ENCODE measurements at regions of chr4 and their contacts with region 1.

Region 1: DNA sequence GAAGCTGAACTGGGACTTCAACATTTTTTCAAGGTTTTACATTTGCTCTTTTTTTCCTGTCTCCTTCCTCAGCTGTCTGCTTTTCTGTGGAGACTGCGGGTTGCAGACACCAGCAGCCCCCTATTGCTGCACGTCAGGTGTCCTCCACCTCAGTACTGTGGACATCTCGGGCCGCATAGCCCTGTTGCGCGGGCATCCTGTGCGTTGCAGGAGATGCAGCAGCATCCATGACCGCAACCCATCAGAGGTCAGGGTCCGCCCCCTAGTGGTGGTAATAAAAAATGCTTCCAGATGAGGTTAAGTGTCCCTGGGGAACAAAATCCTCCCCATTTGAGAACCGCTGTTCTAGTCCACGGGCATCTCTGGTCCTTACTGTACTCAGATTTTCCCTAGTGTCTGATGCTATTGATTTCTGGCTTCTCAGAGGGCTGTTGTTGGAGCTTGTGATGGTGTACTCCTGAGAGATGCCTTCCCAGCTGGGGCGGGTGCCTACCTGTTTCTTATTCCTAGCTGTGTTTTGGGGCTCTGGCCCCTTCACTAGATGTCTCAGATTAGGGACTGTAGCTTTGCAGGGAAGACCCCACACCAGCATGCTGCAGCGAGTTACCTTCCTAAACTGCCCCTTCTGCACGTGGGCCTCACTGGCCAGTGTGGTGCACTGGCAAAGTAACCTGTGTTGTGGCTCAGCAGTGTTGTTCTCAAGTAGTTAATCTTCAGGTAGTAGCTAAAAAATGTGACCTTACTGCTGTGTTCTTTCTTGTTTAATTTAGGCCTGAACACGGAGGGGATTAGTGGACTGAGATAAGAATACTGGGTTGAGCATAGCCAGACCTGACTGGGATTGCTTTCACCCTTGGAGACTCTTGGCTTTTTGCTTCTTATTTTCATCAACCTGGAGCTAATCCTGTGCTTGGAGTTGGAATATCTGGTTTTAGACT is 28.2 kb downstream of the NSD2 start:
- DNase-seq: peak; percentile 43 to 80 (median 70)
- H3K4me3 ChIP-seq: peak overlapping the region in 3 of 59 donors; percentile 11 to 28 (median 27)
- H3K27ac ChIP-seq: peak overlapping the region in 2 of 59 donors; percentile 19 to 25
- H3K27me3 ChIP-seq: no peaks in the 10 kb centered on the region
- CTCF ChIP-seq: peak; percentile 81 to 97 (median 92)

Region 2: GRCh38 chr4:742742-743311 is 1156.6 kb before region 1 on chr4:
- intact Hi-C with region 1: no loop called
- DNase-seq: peak in 6 of 10 donors; percentile 55 to 74 (median 58)
- H3K4me3 ChIP-seq: no peak overlapping the region
- H3K27ac ChIP-seq: no peak overlapping the region
- H3K27me3 ChIP-seq: no peaks in the 10 kb centered on the region
- CTCF ChIP-seq: peak; percentile 50 to 91 (median 81)

Region 3: DNA sequence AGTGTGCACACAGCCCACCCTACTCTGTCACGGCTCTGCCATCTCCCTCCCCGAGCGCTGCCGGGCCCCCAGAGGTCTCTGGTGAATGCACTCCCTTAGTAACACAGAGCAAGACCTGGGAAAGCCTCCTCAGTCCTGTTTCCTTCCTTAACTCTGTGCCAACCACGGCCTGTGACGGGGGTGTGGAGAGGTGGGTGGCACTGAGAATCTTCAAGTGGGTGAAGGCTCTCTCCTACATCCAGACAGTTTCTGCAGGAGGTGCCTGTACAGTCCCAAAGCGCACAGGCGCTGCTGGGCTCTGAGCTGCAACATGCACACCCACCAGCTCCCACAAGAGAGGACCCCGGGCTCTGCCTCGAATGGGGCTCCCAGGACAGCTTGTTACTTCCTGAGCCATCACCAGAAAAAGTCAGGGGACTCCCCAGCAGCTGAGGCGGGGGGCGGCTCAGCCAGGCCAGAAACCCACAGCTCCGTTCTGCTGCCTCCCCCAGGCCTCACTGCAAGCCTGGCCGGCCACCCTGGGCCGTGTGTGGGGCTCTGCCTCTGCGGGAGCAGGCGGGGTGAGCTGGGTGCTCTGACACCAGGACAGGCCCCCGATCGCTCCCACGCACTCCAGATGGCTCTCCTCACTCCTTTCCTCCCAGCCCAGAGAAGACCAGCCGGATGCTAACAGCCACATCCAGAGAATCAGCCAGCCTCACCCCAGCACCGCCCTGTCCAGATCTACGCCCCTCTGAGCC is 245.0 kb before region 1 on chr4:
- intact Hi-C with region 1: no loop called
- DNase-seq: no peak
- H3K4me3 ChIP-seq: no peak overlapping the region
- H3K27ac ChIP-seq: no peak overlapping the region
- H3K27me3 ChIP-seq: no peaks in the 10 kb centered on the region
- CTCF ChIP-seq: no peak

Region 4: DNA sequence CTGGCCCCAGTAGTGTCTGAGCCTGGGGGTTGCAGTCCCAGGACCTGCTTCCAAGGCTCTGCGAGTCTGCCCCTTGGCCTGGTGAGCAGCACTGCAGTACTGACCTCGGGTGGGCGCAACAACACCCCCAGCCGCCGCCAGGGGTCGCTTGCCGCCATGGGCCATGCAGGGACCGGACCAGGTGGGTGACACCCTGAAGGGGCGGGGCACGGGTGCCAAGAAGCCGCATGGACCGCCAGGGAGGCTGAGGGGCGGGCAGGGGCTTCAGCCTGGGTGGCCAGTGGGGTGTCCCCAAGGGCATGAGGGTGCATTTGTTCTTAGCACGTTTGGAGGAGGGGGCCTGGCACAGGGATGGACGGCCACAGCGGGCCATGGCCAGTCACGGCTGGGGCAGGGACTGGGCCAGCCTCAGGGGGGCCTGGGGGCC is 153.1 kb before region 1 on chr4:
- intact Hi-C with region 1: loop called (anchors 5 kb)
- DNase-seq: peak in 9 of 10 donors; percentile 56 to 78 (median 68)
- H3K4me3 ChIP-seq: no peak overlapping the region
- H3K27ac ChIP-seq: peak overlapping the region in 3 of 59 donors; percentile 24 to 82 (median 56)
- H3K27me3 ChIP-seq: peaks cover 0 to 3% (median 0%) of the 10 kb centered on the region in 45 donors
- CTCF ChIP-seq: peak; percentile 32 to 80 (median 71)

Region 5: GRCh38 chr4:1752284-1753041 is 147.0 kb before region 1 on chr4:
- intact Hi-C with region 1: loop called (anchors 5 kb)
- DNase-seq: no peak
- H3K4me3 ChIP-seq: no peak overlapping the region
- H3K27ac ChIP-seq: no peak overlapping the region
- H3K27me3 ChIP-seq: peaks cover 0 to 3% (median 0%) of the 10 kb centered on the region in 45 donors
- CTCF ChIP-seq: no peak

Region 6: DNA sequence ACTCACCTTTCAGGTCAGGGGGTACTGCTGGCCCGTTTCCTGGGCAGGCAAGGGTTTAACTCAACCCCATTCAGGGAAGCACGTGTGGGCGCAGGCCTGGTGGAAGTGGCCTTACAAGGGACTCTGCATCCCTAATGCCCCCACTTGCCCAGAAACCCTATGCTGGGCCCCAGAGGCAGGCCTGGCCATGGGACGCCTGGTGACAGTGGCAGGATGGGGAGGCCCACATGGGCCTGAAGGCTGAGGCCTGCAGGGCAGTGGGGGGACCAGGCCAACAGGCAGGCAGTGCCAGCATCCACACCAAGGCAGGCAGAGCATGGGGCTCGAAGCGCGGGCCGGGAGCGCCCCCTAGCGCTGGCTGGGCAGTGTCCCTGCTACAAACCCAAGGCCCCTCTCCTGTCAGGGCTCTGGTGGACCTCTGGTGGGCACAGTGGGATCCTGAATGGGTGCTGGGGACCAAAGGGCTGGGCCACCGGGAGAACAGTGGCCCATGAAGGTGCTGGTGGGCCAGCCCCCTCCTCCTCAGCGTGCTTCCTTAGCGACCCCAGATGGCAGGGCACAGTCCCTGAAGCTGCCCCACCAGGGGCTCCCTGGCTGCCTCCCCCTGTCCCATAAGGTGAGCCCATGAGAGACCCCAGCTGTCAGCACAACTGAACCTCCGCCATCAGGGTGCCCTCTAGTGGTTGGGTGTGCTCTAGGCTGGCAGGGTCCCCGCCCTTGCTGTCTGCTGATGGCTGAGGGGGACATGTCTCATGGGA is 89.5 kb before region 1 on chr4:
- intact Hi-C with region 1: loop called (anchors 5 to 10 kb)
- DNase-seq: peak in 9 of 10 donors; percentile 61 to 84 (median 69)
- H3K4me3 ChIP-seq: no peak overlapping the region
- H3K27ac ChIP-seq: peak overlapping the region in 10 of 59 donors; percentile 10 to 46 (median 29)
- H3K27me3 ChIP-seq: no peaks in the 10 kb centered on the region
- CTCF ChIP-seq: peak; percentile 47 to 95 (median 85)

Region 7: GRCh38 chr4:1862055-1862926 is 37.1 kb before region 1 on chr4:
- intact Hi-C with region 1: loop called in 1 of 2 experiments (anchors 5 kb)
- DNase-seq: no peak
- H3K4me3 ChIP-seq: peak overlapping the region in 13 of 59 donors; percentile 4 to 41 (median 19)
- H3K27ac ChIP-seq: no peak overlapping the region
- H3K27me3 ChIP-seq: peaks cover 0 to 17% (median 0%) of the 10 kb centered on the region in 45 donors
- CTCF ChIP-seq: no peak